Naive thymus-derived CD4-positive, alpha-beta T cell (primary cell): ENCODE measurements at regions of chr16 and their contacts with region 1.

Region 1: GRCh38 chr16:11797166-11797956 is at the start of gene ZC3H7A:
- DNase-seq: peak; percentile 91 to 97 (median 95)
- ATAC-seq: peak; percentile 95
- H3K4me3 ChIP-seq: peak within 1 kb of the TSS; percentile 82
- H3K4me3 Mint-ChIP-seq: peak within 1 kb of the TSS; percentile 90 to 97 (median 94)
- H3K27ac ChIP-seq: peak within 1 kb of the TSS; percentile 97
- H3K27ac Mint-ChIP-seq: peak within 1 kb of the TSS; percentile 93 to 99 (median 98)
- H3K4me1 ChIP-seq: peaks cover 41 to 63% of the 10 kb centered on the region in 2 donors
- H3K4me1 Mint-ChIP-seq: peaks cover 55 to 84% (median 78%) of the 10 kb centered on the region in 7 donors
- H3K27me3 ChIP-seq: no peaks in the 10 kb centered on the region
- H3K27me3 Mint-ChIP-seq: no peaks in the 10 kb centered on the region
- total RNA-seq, gene ZC3H7A: 86.9 to 102 (median 88.6) TPM

Region 2: GRCh38 chr16:11407047-11407982 is 390.0 kb before region 1 on chr16:
- CTCF ChIA-PET with region 1: no interaction called
- POLR2A ChIA-PET with region 1: no interaction called
- intact Hi-C with region 1: loop called in 1 of 2 experiments (anchors 5 kb)
- DNase-seq: peak; percentile 44 to 78 (median 66)
- ATAC-seq: peak; percentile 85
- H3K4me3 ChIP-seq: no peak overlapping the region
- H3K4me3 Mint-ChIP-seq: no peak overlapping the region
- H3K27ac ChIP-seq: no peak overlapping the region
- H3K27ac Mint-ChIP-seq: peak overlapping the region in 2 of 9 donors; percentile 16 to 72
- H3K4me1 ChIP-seq: no peaks in the 10 kb centered on the region
- H3K4me1 Mint-ChIP-seq: peaks cover 0 to 5% (median 4%) of the 10 kb centered on the region in 7 donors
- H3K27me3 ChIP-seq: no peaks in the 10 kb centered on the region
- H3K27me3 Mint-ChIP-seq: no peaks in the 10 kb centered on the region

Region 3: DNA sequence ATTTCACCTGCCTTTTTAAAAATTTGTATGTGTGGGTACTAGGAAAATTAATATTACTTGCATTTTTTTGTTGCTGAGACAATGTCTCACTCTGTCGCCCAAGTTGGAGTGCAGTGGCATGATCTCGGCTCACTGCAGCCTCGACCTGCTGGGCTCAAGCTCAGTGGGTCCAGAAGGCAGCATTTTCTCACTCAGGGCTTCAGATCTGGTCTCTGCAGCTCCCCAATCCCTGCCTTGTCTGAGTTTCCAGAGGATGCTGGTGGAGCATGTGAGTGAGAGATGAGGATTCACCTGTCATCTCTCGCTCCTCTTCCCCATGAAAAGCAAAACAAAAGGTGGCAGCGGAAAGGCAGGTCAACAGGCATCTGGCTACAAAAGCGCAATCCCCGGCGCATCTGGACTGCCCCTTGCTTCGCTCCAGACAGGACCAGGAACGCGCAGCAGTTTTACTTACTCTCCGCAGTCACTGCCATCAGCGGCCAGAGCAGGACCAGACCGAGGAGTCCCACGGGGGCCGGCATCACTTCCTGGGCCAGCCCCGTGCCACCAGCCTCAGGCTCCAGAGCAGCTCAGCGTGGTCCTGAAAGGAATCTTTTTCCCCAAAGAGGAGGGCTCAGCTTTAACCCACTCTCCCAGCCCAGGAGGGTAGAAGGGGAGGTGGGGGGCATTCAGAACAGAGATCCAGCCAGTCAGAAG is 270.6 kb before region 1 on chr16:
- CTCF ChIA-PET with region 1: no interaction called
- POLR2A ChIA-PET with region 1: no interaction called
- intact Hi-C with region 1: no loop called
- DNase-seq: no peak
- ATAC-seq: no peak
- H3K4me3 ChIP-seq: no peak overlapping the region
- H3K4me3 Mint-ChIP-seq: no peak overlapping the region
- H3K27ac ChIP-seq: no peak overlapping the region
- H3K27ac Mint-ChIP-seq: no peak overlapping the region
- H3K4me1 ChIP-seq: no peaks in the 10 kb centered on the region
- H3K4me1 Mint-ChIP-seq: peaks cover 0 to 1% (median 0%) of the 10 kb centered on the region in 7 donors
- H3K27me3 ChIP-seq: no peaks in the 10 kb centered on the region
- H3K27me3 Mint-ChIP-seq: peaks cover 0 to 25% (median 3%) of the 10 kb centered on the region in 5 donors

Region 4: GRCh38 chr16:11572301-11572995 is 224.9 kb before region 1 on chr16:
- CTCF ChIA-PET with region 1: no interaction called
- POLR2A ChIA-PET with region 1: no interaction called
- intact Hi-C with region 1: no loop called
- DNase-seq: peak in 8 of 9 donors; percentile 34 to 89 (median 84)
- ATAC-seq: peak; percentile 79
- H3K4me3 ChIP-seq: no peak overlapping the region
- H3K4me3 Mint-ChIP-seq: peak overlapping the region; percentile 43 to 81 (median 73)
- H3K27ac ChIP-seq: peak overlapping the region; percentile 72
- H3K27ac Mint-ChIP-seq: peak overlapping the region; percentile 71 to 100 (median 98)
- H3K4me1 ChIP-seq: peaks cover 47 to 70% of the 10 kb centered on the region in 2 donors
- H3K4me1 Mint-ChIP-seq: peaks cover 47 to 94% (median 69%) of the 10 kb centered on the region in 7 donors
- H3K27me3 ChIP-seq: no peaks in the 10 kb centered on the region
- H3K27me3 Mint-ChIP-seq: no peaks in the 10 kb centered on the region

Region 5: GRCh38 chr16:11742539-11743307 is 54.6 kb before region 1 on chr16 and contains the start of gene TXNDC11:
- CTCF ChIA-PET with region 1: interaction called, 14 read pairs
- POLR2A ChIA-PET with region 1: interaction called, 67 read pairs
- intact Hi-C with region 1: loop called (anchors 1 kb)
- DNase-seq: peak; percentile 98 to 100 (median 100)
- ATAC-seq: peak; percentile 98
- H3K4me3 ChIP-seq: peak within 1 kb of the TSS; percentile 92
- H3K4me3 Mint-ChIP-seq: peak within 1 kb of the TSS; percentile 91 to 98 (median 94)
- H3K27ac ChIP-seq: peak within 1 kb of the TSS; percentile 90
- H3K27ac Mint-ChIP-seq: peak within 1 kb of the TSS; percentile 91 to 99 (median 98)
- H3K4me1 ChIP-seq: peaks cover 26 to 28% of the 10 kb centered on the region in 2 donors
- H3K4me1 Mint-ChIP-seq: peaks cover 39 to 55% (median 51%) of the 10 kb centered on the region in 7 donors
- H3K27me3 ChIP-seq: no peaks in the 10 kb centered on the region
- H3K27me3 Mint-ChIP-seq: no peaks in the 10 kb centered on the region
- total RNA-seq, gene TXNDC11: 41.2 to 80.5 (median 55.1) TPM

Region 6: GRCh38 chr16:11783319-11784037 is 13.9 kb before region 1 on chr16:
- CTCF ChIA-PET with region 1: interaction called, 35 read pairs
- POLR2A ChIA-PET with region 1: interaction called, 109 read pairs
- intact Hi-C with region 1: loop called (anchors 1 kb)
- DNase-seq: peak; percentile 31 to 89 (median 82)
- ATAC-seq: peak; percentile 90
- H3K4me3 ChIP-seq: peak overlapping the region; percentile 52
- H3K4me3 Mint-ChIP-seq: peak overlapping the region; percentile 79 to 92 (median 85)
- H3K27ac ChIP-seq: peak overlapping the region; percentile 96
- H3K27ac Mint-ChIP-seq: peak overlapping the region; percentile 95 to 99 (median 99)
- H3K4me1 ChIP-seq: peaks cover 33 to 49% of the 10 kb centered on the region in 2 donors
- H3K4me1 Mint-ChIP-seq: peaks cover 41 to 68% (median 62%) of the 10 kb centered on the region in 7 donors
- H3K27me3 ChIP-seq: no peaks in the 10 kb centered on the region
- H3K27me3 Mint-ChIP-seq: no peaks in the 10 kb centered on the region

Region 7: DNA sequence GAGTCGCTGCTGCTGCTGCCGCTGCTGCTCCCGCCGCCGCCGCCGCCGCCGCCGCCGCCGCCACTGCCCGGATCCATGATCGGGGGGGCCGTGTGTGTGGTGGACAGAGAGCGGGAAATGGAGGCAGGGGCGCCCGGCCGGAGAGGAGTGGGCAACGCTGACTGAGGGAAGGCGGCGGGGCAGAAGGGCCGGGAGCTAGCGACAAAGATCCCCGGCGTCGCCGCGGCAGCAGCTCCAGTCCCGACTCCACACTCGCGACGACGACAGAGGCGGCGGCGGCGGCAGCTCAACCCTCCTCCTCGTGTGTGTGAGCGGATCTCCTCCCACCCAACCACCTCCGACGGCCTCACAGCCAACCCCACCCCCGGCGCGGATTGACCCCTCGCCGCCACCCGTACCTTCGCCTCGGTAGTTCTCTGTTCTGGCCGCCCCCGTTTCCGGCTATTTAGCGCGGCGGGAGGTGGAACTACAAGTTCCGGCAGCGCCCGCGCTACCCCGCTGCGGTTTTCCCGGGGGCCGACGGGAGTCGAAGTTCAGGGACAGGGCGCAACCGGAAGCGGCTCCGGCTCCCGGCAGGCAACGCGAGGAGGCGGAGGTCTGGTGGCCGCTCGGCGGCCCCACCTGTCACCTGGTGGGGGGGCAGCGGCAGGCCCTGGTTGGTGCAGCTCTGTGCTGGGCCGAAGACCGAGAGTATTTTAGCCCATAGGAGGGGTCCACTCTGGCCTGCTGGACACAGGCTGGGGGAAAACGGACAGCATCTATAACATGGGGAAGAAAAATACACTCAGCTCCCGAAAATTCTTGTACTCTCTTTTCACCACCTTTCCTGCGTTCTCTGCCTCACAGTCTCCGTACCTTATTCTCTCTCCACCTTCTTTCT is 118.5 kb after region 1 on chr16 and contains the start of gene GSPT1:
- CTCF ChIA-PET with region 1: no interaction called
- POLR2A ChIA-PET with region 1: interaction called, 7 read pairs
- intact Hi-C with region 1: loop called (anchors 1 kb)
- DNase-seq: peak; percentile 96 to 100 (median 99)
- ATAC-seq: peak; percentile 94
- H3K4me3 ChIP-seq: peak within 1 kb of the TSS; percentile 74
- H3K4me3 Mint-ChIP-seq: peak within 1 kb of the TSS; percentile 85 to 99 (median 96)
- H3K27ac ChIP-seq: peak within 1 kb of the TSS; percentile 87
- H3K27ac Mint-ChIP-seq: peak within 1 kb of the TSS; percentile 87 to 98 (median 95)
- H3K4me1 ChIP-seq: peaks cover 13 to 24% of the 10 kb centered on the region in 2 donors
- H3K4me1 Mint-ChIP-seq: peaks cover 23 to 37% (median 34%) of the 10 kb centered on the region in 7 donors
- H3K27me3 ChIP-seq: no peaks in the 10 kb centered on the region
- H3K27me3 Mint-ChIP-seq: peaks cover 0 to 10% (median 0%) of the 10 kb centered on the region in 5 donors
- total RNA-seq, gene GSPT1: 92.8 to 148 (median 101) TPM